Body of pancreas (tissue), 4 donors: ENCODE measurements at regions of chrX and their contacts with region 1.

Region 1: GRCh38 chrX:110146521-110146920 is 143.6 kb downstream of the TMEM164 start:
- DNase-seq: peak; percentile 20 to 45 (median 28)
- ATAC-seq: peak; percentile 45
- H3K4me3 ChIP-seq: no peak overlapping the region
- H3K27ac ChIP-seq: no peak overlapping the region
- H3K4me1 ChIP-seq: peaks cover 26% of the 10 kb centered on the region
- H3K27me3 ChIP-seq: no peaks in the 10 kb centered on the region
- CTCF ChIP-seq: peak; percentile 36 to 64 (median 52)
- POLR2A ChIP-seq: no peak

Region 2: DNA sequence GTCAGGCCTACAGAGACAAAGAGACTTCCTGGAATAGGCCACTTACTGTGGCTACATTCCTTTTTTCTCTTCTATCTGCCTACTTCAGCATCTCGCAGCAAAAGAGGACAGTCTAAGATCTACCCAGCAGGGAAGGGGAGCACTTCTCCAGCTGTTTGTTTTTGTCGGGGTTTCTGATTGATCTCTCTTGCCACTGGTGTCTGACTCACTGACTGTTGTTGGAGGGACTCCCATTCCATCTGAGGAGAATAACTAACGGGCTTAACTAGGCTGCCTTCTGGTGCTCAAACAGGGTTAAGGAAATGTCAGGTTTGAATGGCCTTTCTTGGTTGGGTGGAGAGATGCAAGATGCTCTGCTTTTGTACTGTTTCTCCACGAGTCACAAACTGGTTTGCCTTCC is 243.9 kb before region 1 on chrX:
- intact Hi-C with region 1: loop called (anchors 10 kb)
- DNase-seq: no peak
- ATAC-seq: no peak
- H3K4me3 ChIP-seq: no peak overlapping the region
- H3K27ac ChIP-seq: no peak overlapping the region
- H3K4me1 ChIP-seq: no peaks in the 10 kb centered on the region
- H3K27me3 ChIP-seq: no peaks in the 10 kb centered on the region
- CTCF ChIP-seq: no peak
- POLR2A ChIP-seq: no peak